ENCODE measurements at regions of chr2 and their contacts with region 1.

Region 1: DNA sequence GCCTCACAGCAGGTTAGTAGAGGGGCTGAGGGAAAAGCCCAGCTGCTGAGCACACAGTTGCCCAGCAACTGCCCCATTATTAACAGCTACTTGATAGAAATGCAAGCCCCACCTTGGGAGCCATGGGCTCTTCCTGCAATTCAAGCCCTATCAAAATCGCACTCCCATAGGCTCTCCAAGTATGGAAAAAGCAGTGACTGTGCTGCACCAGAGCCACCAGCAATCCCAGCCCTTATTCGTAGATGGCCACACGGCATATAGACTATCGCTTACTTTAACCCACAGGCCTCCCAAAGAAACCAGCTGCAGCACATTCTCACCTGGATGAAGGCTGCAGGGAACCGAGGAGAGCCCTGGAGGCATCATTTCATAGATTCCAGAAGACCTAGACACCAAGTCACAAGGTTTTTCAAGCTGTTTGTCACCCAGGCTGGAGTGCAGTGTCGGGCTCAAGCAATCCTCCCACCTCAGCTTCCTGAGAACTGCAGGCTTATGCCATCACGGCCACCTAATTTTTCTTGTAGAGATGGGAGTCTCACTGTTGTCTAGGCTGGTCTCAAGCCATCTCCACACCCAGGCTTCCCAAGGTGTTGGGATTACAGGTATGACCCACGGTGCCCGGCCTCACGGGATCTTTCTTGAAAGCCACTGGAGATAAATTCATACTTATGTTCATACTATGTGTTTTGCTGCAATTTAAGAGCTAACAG is 11.3 kb downstream of the NCL start:
- DNase-seq: no peak
- H3K4me3 ChIP-seq: no peak overlapping the region
- H3K27me3 ChIP-seq: no peaks in the 10 kb centered on the region
- CTCF ChIP-seq: no peak

Region 2: GRCh38 chr2:231222318-231223055 is 230.5 kb before region 1 on chr2:
- CTCF ChIA-PET with region 1: interaction called, 39 read pairs
- POLR2A ChIA-PET with region 1: no interaction called
- DNase-seq: no peak
- H3K4me3 ChIP-seq: no peak overlapping the region
- H3K27me3 ChIP-seq: no peaks in the 10 kb centered on the region
- CTCF ChIP-seq: no peak

Region 3: DNA sequence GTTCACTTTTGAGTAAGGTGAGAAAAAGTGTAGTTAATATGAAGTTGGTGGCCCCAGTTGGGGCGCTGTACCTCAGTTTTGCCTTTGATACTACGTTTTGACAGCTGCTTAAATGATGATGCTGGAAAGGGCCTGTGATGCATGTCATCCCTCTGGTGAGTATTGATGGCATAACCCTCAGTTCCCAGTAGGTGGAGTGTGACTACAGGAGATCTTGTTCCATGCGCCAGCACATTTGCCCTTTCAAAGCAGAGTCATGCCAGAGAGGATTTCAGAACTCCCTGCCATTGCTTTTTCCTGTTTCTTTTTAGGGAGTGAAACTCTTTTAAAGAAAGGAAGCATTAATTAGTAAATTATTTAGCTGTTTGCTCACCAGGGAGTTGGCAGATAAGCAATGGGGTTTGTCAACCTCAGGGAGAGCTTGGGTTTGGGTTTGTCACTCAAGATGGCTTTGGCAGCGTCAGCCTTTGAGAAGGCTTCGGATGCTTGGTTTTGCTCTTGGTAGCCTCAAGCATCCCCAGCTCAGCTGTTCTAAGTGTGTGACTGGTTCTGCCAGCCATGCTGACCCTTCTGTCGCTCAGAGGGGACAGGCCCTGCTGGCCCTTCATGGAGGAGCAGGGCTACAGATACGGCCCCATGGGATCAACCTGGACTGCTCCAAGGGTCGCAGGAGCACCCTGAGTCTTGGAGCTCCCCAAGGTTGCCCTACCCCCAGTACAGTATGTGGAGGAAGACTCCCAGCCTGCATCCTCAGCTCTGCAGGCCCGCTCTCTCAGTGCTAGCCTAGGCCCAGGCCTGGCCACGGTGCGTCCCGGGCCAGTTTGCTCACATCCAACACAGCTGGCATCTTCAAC is 225.4 kb before region 1 on chr2:
- CTCF ChIA-PET with region 1: interaction called, 39 read pairs
- POLR2A ChIA-PET with region 1: no interaction called
- DNase-seq: no peak
- H3K4me3 ChIP-seq: no peak overlapping the region
- H3K27me3 ChIP-seq: no peaks in the 10 kb centered on the region
- CTCF ChIP-seq: peak; percentile 79

Region 4: GRCh38 chr2:231297108-231297908 is 155.6 kb before region 1 on chr2:
- CTCF ChIA-PET with region 1: interaction called, 16 read pairs
- POLR2A ChIA-PET with region 1: interaction called, 4 read pairs
- DNase-seq: no peak
- H3K4me3 ChIP-seq: no peak overlapping the region
- H3K27me3 ChIP-seq: no peaks in the 10 kb centered on the region
- CTCF ChIP-seq: peak; percentile 76

Region 5: GRCh38 chr2:231464576-231465404 is 11.8 kb after region 1 on chr2:
- CTCF ChIA-PET with region 1: interaction called, 15 read pairs
- POLR2A ChIA-PET with region 1: interaction called, 4 read pairs
- DNase-seq: no peak
- H3K4me3 ChIP-seq: peak overlapping the region; percentile 80
- H3K27me3 ChIP-seq: no peaks in the 10 kb centered on the region
- CTCF ChIP-seq: no peak

Measured in BJ (cell line).